Aorta (tissue), 5 donors: ENCODE measurements at regions of chr6 and their contacts with region 1.

Region 1: GRCh38 chr6:56381840-56382251 is 134.5 kb upstream of the COL21A1 start:
- DNase-seq: no peak
- ATAC-seq: no peak
- H3K4me3 ChIP-seq: no peak overlapping the region
- H3K27ac ChIP-seq: no peak overlapping the region
- H3K4me1 ChIP-seq: peaks cover 3 to 9% of the 10 kb centered on the region in 2 donors
- H3K27me3 ChIP-seq: no peaks in the 10 kb centered on the region

Region 2: GRCh38 chr6:56445818-56446217 is 64.0 kb after region 1 on chr6:
- intact Hi-C with region 1: loop called in 1 of 2 experiments (anchors 5 kb)
- DNase-seq: no peak
- ATAC-seq: peak; percentile 57
- H3K4me3 ChIP-seq: no peak overlapping the region
- H3K27ac ChIP-seq: no peak overlapping the region
- H3K4me1 ChIP-seq: peaks cover 2 to 9% of the 10 kb centered on the region in 2 donors
- H3K27me3 ChIP-seq: no peaks in the 10 kb centered on the region